RWPE1 (cell line): ENCODE measurements at regions of chr16 and their contacts with region 1.

Region 1: DNA sequence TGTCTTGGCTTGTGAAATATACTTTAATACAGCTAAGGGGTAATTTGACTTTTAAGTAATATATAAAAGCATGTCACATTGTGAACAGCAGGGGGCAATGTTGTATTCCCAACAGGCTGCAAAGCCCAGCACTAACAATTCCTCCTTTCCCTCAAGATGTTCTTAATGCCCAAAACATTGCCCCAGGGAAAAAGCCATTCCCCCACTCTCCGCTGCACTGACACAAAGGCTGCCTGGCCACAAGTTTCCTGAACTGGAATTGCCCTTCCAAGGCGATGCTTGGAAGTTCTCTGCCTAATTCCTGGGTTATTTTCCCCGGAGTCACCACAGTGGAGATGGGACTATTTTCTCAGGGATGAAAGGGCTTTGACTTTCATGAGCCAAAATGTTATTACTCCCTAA is 27.2 kb downstream of the CLEC16A start:
- DNase-seq: peak; percentile 60
- H3K27ac ChIP-seq: peak overlapping the region; percentile 43
- CTCF ChIP-seq: peak; percentile 77

Region 2: DNA sequence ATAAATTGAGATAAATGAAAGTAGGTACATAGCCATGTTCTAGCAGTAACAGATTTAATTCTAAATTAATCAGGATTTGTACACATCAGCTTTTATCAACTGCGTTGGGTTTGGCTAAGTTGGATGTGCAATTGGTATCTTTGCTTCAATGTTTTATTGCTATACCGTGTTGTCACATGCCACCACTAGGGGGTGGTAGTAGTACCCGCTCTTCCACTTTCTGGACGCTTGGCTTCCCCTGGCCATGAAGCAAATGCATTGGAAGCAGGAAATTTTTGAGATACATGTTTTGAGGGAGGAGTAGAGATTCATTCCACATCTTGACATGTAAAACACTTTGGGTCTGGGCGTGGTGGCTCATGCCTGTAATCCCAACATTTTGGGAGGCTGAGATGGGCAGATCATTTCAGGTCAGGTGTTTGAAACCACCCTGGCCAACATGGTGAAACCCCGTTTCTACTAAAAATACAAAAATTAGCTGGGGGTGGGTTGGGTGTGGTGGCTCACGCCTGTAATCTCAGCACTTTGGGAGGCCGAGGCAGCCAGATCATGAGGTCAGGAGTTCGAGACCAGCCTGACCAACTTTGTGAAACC is 449.8 kb before region 1 on chr16:
- CTCF ChIA-PET with region 1: no interaction called
- POLR2A ChIA-PET with region 1: no interaction called
- DNase-seq: peak; percentile 57
- H3K27ac ChIP-seq: no peak overlapping the region
- CTCF ChIP-seq: peak; percentile 65

Region 3: DNA sequence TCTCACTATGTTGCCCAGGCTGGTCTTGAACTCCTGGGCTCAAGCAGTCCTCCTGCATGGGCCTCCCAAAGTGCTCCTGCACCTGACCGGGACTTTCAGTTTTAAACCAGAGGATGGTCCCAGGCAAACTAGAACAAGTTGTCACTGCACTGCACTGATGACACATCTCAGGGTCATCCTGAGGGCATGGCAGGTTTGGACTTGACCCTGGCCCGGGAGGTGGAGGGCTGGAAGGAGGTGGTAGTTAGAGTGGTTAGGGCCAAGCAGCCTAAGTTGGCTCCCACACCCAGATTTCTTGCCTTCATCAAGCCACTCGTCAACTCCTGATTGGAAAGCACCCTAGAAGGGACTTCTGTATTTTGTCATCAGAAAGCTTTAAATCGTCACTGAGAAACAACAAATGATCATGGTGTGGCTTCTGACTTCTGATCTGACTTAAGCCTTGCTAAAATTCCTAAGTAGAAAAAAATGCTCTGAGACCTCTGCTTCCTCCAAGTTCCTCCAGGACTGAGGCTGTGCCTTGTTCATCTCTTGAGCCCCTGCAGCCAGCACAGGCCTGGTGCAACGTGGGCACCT is 434.7 kb before region 1 on chr16:
- CTCF ChIA-PET with region 1: no interaction called
- POLR2A ChIA-PET with region 1: no interaction called
- DNase-seq: no peak
- H3K27ac ChIP-seq: 0 out of 2 replicates have a peak overlapping the region, but pooled peaks have one; percentile 8
- CTCF ChIP-seq: no peak

Region 4: GRCh38 chr16:10941151-10941908 is 30.2 kb before region 1 on chr16:
- CTCF ChIA-PET with region 1: no interaction called
- POLR2A ChIA-PET with region 1: no interaction called
- DNase-seq: peak; percentile 53
- H3K27ac ChIP-seq: peak overlapping the region; percentile 74
- CTCF ChIP-seq: no peak

Region 5: DNA sequence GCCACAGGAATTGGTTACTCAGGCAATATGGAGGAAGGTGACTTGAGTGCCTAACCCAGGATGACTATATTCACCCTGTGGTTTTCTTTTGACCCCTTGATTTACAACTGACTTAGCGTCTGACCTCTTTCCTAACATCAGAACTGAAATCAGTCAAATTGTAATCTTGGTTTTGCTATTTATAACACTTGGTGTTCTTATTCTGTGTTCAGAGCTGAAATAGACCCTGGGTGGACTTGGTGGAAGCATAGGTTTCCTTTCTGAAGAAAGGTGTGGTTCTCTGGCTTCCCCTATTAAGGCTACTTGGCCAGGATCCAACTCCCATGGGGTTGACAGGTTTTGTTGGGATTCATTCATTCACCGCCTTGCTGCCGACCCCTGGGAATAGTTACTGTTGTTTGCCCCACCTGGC is 53.6 kb after region 1 on chr16:
- CTCF ChIA-PET with region 1: interaction called, 4 read pairs
- POLR2A ChIA-PET with region 1: interaction called, 10 read pairs
- DNase-seq: no peak
- H3K27ac ChIP-seq: no peak overlapping the region
- CTCF ChIP-seq: no peak